Activated CD4-positive, alpha-beta T cell treated with anti-CD3 and anti-CD28 coated beads for 36 hours (primary cell): ENCODE measurements at regions of chr7 and their contacts with region 1.

Region 1: GRCh38 chr7:95476904-95477594 is 8.7 kb upstream of the ASB4 start:
- DNase-seq: peak; percentile 64
- ATAC-seq: peak; percentile 47
- H3K4me3 Mint-ChIP-seq: no peak overlapping the region
- H3K27ac Mint-ChIP-seq: no peak overlapping the region
- H3K4me1 Mint-ChIP-seq: no peaks in the 10 kb centered on the region
- H3K27me3 Mint-ChIP-seq: peaks cover 8% of the 10 kb centered on the region

Region 2: DNA sequence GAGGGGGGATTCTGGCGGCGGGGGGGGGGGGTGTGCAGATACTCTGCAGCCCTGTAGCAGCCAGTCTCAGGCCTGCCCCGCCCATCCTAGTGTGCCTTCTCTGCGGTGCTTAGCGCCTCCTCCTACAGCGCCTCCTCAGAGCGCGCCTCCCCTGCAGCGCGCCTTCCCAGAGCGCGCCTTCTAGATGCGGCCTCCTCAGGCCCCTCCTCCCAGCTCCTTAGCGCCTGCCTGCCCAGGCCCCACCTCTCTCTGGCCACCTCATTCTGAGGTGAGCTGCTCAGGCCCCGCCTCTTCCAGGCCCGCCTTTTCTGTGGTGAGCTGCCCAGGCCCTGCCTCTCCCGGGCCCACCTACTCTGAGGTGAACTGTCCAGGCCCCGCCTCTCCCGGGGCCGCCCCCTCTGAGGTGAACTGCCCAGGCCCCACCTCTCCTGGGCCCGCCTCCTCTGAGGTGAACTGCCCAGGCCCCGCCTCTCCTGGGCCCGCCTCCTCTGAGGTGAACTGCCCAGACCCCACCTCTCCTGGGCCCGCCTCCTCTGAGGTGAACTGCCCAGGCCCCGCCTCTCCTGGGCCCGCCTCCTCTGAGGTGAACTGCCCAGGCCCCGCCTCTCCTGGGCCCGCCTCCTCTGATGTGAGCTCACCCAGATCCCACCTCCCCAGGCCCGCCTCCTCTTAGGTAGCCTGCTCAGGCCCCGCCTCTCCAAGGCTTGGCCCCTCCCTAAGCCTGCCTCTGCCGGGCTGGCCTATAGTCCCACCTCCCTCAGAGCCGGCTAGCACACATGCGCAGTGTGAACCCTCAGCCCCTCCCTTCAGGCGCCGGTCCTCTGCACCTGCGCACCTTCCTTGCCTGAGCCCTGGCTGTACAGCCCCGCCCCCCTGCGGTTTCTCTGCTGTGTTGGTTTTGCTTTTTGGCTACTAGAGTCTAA is 819.0 kb before region 1 on chr7:
- CTCF ChIA-PET with region 1: no interaction called
- POLR2A ChIA-PET with region 1: no interaction called
- intact Hi-C with region 1: loop called in 1 of 2 experiments (anchors 10 kb)
- DNase-seq: peak; percentile 96
- ATAC-seq: peak; percentile 89
- H3K4me3 Mint-ChIP-seq: peak overlapping the region; percentile 67
- H3K27ac Mint-ChIP-seq: no peak overlapping the region
- H3K4me1 Mint-ChIP-seq: peaks cover 20% of the 10 kb centered on the region
- H3K27me3 Mint-ChIP-seq: peaks cover 20% of the 10 kb centered on the region

Region 3: GRCh38 chr7:95199779-95200558 is 277.1 kb before region 1 on chr7:
- CTCF ChIA-PET with region 1: no interaction called
- POLR2A ChIA-PET with region 1: no interaction called
- intact Hi-C with region 1: loop called in 1 of 2 experiments (anchors 10 kb)
- DNase-seq: peak; percentile 6
- ATAC-seq: no peak
- H3K4me3 Mint-ChIP-seq: no peak overlapping the region
- H3K27ac Mint-ChIP-seq: no peak overlapping the region
- H3K4me1 Mint-ChIP-seq: no peaks in the 10 kb centered on the region
- H3K27me3 Mint-ChIP-seq: peaks cover 6% of the 10 kb centered on the region

Region 4: GRCh38 chr7:95342642-95343307 is 134.3 kb before region 1 on chr7:
- CTCF ChIA-PET with region 1: no interaction called
- POLR2A ChIA-PET with region 1: no interaction called
- intact Hi-C with region 1: no loop called
- DNase-seq: no peak
- ATAC-seq: no peak
- H3K4me3 Mint-ChIP-seq: no peak overlapping the region
- H3K27ac Mint-ChIP-seq: no peak overlapping the region
- H3K4me1 Mint-ChIP-seq: no peaks in the 10 kb centered on the region
- H3K27me3 Mint-ChIP-seq: peaks cover 3% of the 10 kb centered on the region

Region 5: DNA sequence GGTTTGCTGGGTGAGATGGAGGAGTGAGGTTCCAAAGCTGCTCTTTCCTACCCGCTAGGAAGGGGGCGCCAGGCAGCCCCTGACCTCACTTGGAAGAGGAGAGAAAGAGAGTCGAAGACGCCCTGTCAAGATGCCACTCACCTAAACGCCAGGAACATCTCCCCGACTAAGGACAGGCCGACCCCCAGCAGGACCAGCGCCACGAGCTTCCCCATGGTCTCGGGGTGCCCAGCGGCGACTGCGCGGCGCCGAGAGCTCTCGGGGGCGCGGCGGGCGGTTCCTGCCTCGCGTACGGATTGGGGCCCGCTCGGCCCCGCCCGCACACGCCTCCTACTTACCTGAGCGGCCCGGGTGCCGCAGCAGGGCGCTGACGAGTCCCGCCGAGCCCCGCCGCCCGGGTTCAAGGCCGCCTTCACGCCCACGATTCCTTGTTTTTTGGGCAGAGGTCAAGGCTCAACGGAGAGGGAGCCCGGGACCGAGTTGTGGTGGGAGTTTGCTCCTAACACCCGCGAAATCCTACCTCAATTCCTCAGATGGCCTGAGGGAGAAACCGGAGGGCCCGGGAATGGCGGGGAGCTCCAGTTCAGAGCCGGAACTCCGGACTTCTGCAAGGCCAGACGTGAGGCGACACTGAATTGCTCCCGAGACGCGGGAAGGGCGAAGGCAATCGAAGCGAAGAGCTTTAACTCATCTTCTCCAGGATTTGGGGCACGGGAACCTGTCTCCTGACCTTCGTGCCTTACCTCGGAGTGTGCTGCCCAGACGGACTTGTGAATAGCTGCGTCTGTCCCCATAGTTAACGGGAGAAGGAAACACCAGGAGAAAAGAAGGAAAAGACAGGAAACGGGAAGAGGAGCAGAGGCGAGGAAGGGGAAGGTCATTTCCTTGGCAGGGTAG is 80.7 kb before region 1 on chr7 and contains the start of gene PON3:
- CTCF ChIA-PET with region 1: interaction called, 11 read pairs
- POLR2A ChIA-PET with region 1: no interaction called
- intact Hi-C with region 1: loop called in 1 of 2 experiments (anchors 2 kb)
- DNase-seq: peak; percentile 60
- ATAC-seq: peak; percentile 92
- H3K4me3 Mint-ChIP-seq: peak within 1 kb of the TSS; percentile 64
- H3K27ac Mint-ChIP-seq: no peak within 1 kb of the TSS
- H3K4me1 Mint-ChIP-seq: peaks cover 8% of the 10 kb centered on the region
- H3K27me3 Mint-ChIP-seq: peaks cover 29% of the 10 kb centered on the region
- total RNA-seq, gene PON3: not detected

Region 6: DNA sequence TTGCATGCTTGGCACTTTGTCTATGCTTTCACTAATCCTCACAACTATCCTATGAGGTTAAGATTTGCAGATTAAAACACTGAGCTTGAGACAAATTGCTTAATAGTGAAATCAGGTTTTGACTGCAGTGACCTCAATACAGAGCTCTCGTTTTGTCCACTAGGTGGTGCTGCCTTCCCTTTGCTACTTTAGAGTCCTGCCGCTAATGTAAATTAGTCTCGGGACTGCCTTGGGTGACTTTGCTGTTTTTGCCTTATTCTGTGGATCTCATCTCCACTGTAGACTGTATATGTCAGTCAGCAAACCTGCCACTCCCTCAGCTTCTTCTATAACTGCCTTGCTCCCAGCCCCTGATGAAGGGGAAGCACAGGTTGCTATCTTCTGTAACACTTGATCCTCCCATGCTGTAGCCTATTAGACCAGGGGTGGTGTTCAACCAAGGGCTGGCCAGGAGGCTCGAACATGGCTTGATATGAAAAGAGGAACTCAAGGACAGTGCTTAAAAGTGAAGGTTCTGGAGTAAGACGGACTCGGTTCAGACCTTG is 34.7 kb after region 1 on chr7:
- CTCF ChIA-PET with region 1: interaction called, 19 read pairs
- POLR2A ChIA-PET with region 1: no interaction called
- intact Hi-C with region 1: no loop called
- DNase-seq: peak; percentile 76
- ATAC-seq: peak; percentile 92
- H3K4me3 Mint-ChIP-seq: no peak overlapping the region
- H3K27ac Mint-ChIP-seq: no peak overlapping the region
- H3K4me1 Mint-ChIP-seq: no peaks in the 10 kb centered on the region
- H3K27me3 Mint-ChIP-seq: peaks cover 7% of the 10 kb centered on the region

Region 7: DNA sequence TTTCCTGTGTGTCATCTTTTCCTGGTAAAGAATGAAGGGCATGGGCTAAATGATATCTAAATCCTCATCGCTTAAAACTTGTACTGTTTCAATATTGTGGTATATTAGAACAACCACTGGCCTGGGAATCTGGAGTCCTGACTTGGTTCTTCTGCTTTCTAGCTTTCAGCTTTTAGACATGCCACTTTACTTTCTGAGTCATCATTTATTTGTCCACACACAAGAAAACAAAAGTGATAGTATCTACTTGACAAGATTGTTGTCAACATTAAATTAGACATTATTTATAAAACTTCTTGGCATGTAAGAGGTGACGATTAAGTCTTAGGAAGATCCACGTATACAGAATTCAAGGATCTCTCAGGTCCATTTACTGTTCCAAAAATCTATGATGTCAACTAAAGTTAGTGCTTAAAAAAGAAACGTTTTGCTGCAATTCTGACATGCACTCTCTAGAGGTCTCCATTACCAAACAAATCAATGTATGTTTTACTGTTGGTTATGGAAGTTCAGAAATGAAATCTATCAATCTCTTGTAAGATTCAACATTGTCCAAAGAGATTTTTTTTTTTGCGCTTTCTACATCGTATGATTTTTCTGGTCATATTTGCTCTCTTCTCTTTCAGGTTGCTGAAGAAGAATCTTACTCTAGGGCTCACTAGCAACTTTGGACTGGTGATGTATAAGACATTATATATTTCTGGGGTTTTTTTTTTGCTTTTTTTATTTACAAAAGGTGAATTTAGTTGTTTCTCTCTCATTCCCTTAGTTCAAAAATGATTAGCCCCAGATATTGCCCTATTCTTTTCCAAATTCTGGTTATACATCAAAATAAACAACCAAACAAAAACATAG is 241.7 kb after region 1 on chr7:
- CTCF ChIA-PET with region 1: no interaction called
- POLR2A ChIA-PET with region 1: no interaction called
- intact Hi-C with region 1: no loop called
- DNase-seq: no peak
- ATAC-seq: no peak
- H3K4me3 Mint-ChIP-seq: no peak overlapping the region
- H3K27ac Mint-ChIP-seq: no peak overlapping the region
- H3K4me1 Mint-ChIP-seq: no peaks in the 10 kb centered on the region
- H3K27me3 Mint-ChIP-seq: no peaks in the 10 kb centered on the region